Activated CD8-positive, alpha-beta T cell treated with anti-CD3 and anti-CD28 coated beads for 36 hours (primary cell): ENCODE measurements at regions of chr10 and their contacts with region 1.

Region 1: DNA sequence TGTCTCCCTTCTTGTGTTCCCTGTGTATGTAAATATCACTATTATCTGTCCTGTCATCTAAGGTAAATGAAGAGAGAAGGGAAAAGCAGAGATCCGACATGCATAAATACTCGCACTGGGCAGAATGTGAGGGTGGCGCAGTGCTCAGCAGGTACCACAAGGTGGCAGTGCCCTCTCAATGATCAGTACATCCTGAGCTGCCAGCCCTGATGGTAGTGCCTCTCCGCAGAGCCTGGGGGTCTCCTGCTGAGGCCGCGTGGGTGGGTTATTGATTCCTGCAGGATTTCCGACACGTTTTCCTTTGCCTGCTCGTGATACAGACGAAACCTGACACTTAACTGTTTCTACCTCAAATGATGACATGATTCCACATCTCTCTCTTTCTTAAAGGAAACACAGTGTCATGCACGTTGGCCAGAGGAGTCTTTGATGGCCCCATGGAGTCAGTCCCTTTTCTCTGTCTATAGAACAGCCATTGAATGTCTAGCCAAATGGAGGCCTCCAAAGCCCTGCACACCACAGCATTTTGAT is 19.8 kb downstream of the RGR start:
- DNase-seq: peak; percentile 85
- ATAC-seq: peak; percentile 94
- H3K4me3 Mint-ChIP-seq: no peak overlapping the region
- H3K27ac Mint-ChIP-seq: no peak overlapping the region
- H3K4me1 Mint-ChIP-seq: peaks cover 15% of the 10 kb centered on the region
- H3K27me3 Mint-ChIP-seq: peaks cover 24% of the 10 kb centered on the region
- CTCF ChIP-seq: peak; percentile 97

Region 2: GRCh38 chr10:83617692-83618545 is 646.8 kb before region 1 on chr10:
- CTCF ChIA-PET with region 1: no interaction called
- POLR2A ChIA-PET with region 1: no interaction called
- intact Hi-C with region 1: no loop called
- DNase-seq: no peak
- ATAC-seq: no peak
- H3K4me3 Mint-ChIP-seq: no peak overlapping the region
- H3K27ac Mint-ChIP-seq: no peak overlapping the region
- H3K4me1 Mint-ChIP-seq: no peaks in the 10 kb centered on the region
- H3K27me3 Mint-ChIP-seq: no peaks in the 10 kb centered on the region
- CTCF ChIP-seq: no peak

Region 3: GRCh38 chr10:84308481-84309304 is 44.0 kb after region 1 on chr10:
- CTCF ChIA-PET with region 1: interaction called, 10 read pairs
- POLR2A ChIA-PET with region 1: no interaction called
- intact Hi-C with region 1: no loop called
- DNase-seq: peak; percentile 66
- ATAC-seq: peak; percentile 71
- H3K4me3 Mint-ChIP-seq: peak overlapping the region; percentile 18
- H3K27ac Mint-ChIP-seq: peak overlapping the region; percentile 50
- H3K4me1 Mint-ChIP-seq: peaks cover 34% of the 10 kb centered on the region
- H3K27me3 Mint-ChIP-seq: peaks cover 5% of the 10 kb centered on the region
- CTCF ChIP-seq: no peak

Region 4: DNA sequence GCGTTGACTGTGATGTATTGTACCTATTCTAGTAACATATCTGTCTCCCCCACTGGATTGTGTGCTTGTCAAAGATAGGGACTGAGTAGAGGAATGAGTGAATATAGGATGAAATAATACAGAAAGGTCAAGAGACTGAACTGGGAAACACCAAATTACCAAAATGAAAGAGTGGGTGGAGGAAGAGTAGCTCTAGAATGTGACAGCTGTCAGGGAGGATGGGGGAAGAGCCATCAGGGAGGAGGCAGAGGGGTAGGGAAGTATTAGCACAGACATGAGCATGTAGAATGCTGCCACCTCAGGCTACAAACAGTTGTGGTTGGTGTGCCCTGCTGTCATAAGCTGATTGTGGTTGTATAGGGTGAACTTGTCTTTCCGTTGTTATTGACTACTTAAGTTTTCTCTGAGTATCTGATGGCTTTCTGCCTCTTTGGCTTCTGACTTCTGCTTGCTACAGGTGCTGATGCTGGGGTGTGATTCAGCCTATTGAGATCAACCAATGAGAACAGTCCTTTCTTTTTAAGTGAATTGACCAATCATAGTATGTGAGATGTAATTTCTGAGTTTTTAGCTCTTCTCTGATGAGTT is 69.3 kb after region 1 on chr10:
- CTCF ChIA-PET with region 1: interaction called, 19 read pairs
- POLR2A ChIA-PET with region 1: interaction called, 3 read pairs
- intact Hi-C with region 1: loop called (anchors 5 kb)
- DNase-seq: peak; percentile 84
- ATAC-seq: peak; percentile 84
- H3K4me3 Mint-ChIP-seq: peak overlapping the region; percentile 64
- H3K27ac Mint-ChIP-seq: peak overlapping the region; percentile 93
- H3K4me1 Mint-ChIP-seq: peaks cover 22% of the 10 kb centered on the region
- H3K27me3 Mint-ChIP-seq: no peaks in the 10 kb centered on the region
- CTCF ChIP-seq: no peak

Region 5: DNA sequence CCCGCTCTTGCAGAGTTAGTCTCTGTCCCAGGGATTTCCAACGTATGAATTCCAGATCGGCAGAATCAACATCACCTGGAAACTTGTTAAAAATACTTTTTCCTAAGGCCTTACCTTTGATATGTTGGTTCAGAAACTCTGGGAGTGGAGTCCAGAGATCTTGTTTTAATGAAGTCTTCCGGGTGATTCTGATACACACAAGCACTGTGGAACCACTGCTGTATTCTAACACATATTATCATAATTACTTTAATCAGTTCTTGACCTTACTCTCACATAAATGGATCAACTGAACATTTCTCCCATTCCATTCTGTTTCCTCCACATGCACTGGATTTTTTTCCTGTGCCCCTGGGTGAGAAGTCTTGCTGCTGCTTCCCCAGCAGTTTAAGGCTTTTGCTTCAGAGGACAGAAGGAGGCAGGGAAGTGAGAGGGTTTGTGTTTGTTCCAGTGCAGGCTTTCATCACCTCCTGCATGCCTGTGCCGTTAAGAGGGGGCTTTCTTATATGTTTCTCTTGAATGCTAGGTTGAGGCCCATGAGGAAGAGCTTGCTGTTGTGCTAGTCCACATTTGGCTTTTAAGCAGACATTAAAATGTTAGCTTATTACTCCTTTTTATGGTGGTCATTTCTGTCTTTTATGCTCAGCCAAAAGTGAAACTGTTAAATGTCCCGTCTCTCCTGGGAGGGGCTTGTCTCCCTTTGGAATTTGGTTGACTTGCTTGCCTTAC is 96.1 kb after region 1 on chr10:
- CTCF ChIA-PET with region 1: interaction called, 12 read pairs
- POLR2A ChIA-PET with region 1: no interaction called
- intact Hi-C with region 1: no loop called
- DNase-seq: no peak
- ATAC-seq: no peak
- H3K4me3 Mint-ChIP-seq: peak overlapping the region; percentile 1
- H3K27ac Mint-ChIP-seq: peak overlapping the region; percentile 60
- H3K4me1 Mint-ChIP-seq: peaks cover 81% of the 10 kb centered on the region
- H3K27me3 Mint-ChIP-seq: no peaks in the 10 kb centered on the region
- CTCF ChIP-seq: no peak

Region 6: GRCh38 chr10:84531396-84531795 is 266.7 kb after region 1 on chr10:
- CTCF ChIA-PET with region 1: interaction called, 282 read pairs
- POLR2A ChIA-PET with region 1: no interaction called
- intact Hi-C with region 1: loop called (anchors 2 kb)
- DNase-seq: no peak
- ATAC-seq: no peak
- H3K4me3 Mint-ChIP-seq: no peak overlapping the region
- H3K27ac Mint-ChIP-seq: no peak overlapping the region
- H3K4me1 Mint-ChIP-seq: peaks cover 5% of the 10 kb centered on the region
- H3K27me3 Mint-ChIP-seq: no peaks in the 10 kb centered on the region
- CTCF ChIP-seq: no peak